Natural killer cell (primary cell): ENCODE measurements at regions of chr6 and their contacts with region 1.

Region 1: DNA sequence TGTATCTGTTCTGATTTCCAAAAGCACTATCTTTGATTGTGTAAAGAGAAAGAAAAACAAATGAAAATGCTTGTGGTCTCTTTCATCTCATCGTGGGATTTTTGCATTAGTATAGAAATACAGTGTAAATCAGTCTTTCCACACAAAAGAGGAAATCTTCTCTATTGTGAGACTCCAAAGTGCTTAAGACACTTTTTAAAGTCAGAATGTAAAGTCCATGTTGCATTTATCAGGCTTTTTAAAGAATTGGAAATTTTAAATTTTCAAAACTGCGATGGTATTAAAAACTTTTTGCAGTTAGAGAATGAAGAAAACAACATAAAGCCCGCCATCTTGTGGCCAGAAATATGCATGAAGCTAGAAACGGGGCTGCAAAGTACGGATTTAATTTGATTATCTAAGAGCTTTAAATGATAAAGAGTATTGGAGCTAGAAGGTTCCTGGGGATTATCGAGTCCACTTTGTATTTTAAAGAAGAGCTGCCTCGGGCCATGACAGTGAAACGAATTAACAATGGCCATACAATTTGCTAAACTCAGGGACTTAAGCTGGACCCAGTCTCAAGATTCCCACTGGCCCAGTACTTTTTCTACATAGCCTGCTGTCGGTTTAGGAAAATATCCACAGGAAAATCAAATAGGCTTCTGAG is 339.6 kb downstream of the ARHGAP18 start:
- DNase-seq: peak in 1 of 2 donors; percentile 68
- ATAC-seq: peak in 1 of 3 donors; percentile 57
- H3K4me3 ChIP-seq: no peak overlapping the region
- H3K4me3 Mint-ChIP-seq: peak overlapping the region; percentile 69
- H3K27ac ChIP-seq: no peak overlapping the region
- H3K27ac Mint-ChIP-seq: no peak overlapping the region
- H3K4me1 ChIP-seq: peaks cover 12% of the 10 kb centered on the region
- H3K4me1 Mint-ChIP-seq: peaks cover 32 to 36% of the 10 kb centered on the region in 2 donors
- H3K27me3 ChIP-seq: no peaks in the 10 kb centered on the region
- H3K27me3 Mint-ChIP-seq: no peaks in the 10 kb centered on the region
- CTCF ChIP-seq: peak; percentile 83

Region 2: GRCh38 chr6:127737009-127737486 is 1633.3 kb before region 1 on chr6:
- intact Hi-C with region 1: loop called (anchors 2 kb)
- DNase-seq: peak in 1 of 2 donors; percentile 85
- ATAC-seq: peak; percentile 69 to 79 (median 77)
- H3K4me3 ChIP-seq: no peak overlapping the region
- H3K4me3 Mint-ChIP-seq: no peak overlapping the region
- H3K27ac ChIP-seq: no peak overlapping the region
- H3K27ac Mint-ChIP-seq: no peak overlapping the region
- H3K4me1 ChIP-seq: no peaks in the 10 kb centered on the region
- H3K4me1 Mint-ChIP-seq: no peaks in the 10 kb centered on the region
- H3K27me3 ChIP-seq: no peaks in the 10 kb centered on the region
- H3K27me3 Mint-ChIP-seq: peaks cover 0 to 7% of the 10 kb centered on the region in 2 donors
- CTCF ChIP-seq: peak; percentile 57

Region 3: GRCh38 chr6:127855542-127856159 is 1514.7 kb before region 1 on chr6:
- intact Hi-C with region 1: loop called (anchors 5 kb)
- DNase-seq: peak in 1 of 2 donors; percentile 78
- ATAC-seq: no peak
- H3K4me3 ChIP-seq: no peak overlapping the region
- H3K4me3 Mint-ChIP-seq: no peak overlapping the region
- H3K27ac ChIP-seq: no peak overlapping the region
- H3K27ac Mint-ChIP-seq: no peak overlapping the region
- H3K4me1 ChIP-seq: no peaks in the 10 kb centered on the region
- H3K4me1 Mint-ChIP-seq: peaks cover 4 to 6% of the 10 kb centered on the region in 2 donors
- H3K27me3 ChIP-seq: no peaks in the 10 kb centered on the region
- H3K27me3 Mint-ChIP-seq: peaks cover 0 to 3% of the 10 kb centered on the region in 2 donors
- CTCF ChIP-seq: peak; percentile 65

Region 4: GRCh38 chr6:128725271-128726233 is 644.8 kb before region 1 on chr6:
- intact Hi-C with region 1: loop called (anchors 5 kb)
- DNase-seq: peak in 1 of 2 donors; percentile 45
- ATAC-seq: no peak
- H3K4me3 ChIP-seq: no peak overlapping the region
- H3K4me3 Mint-ChIP-seq: no peak overlapping the region
- H3K27ac ChIP-seq: no peak overlapping the region
- H3K27ac Mint-ChIP-seq: no peak overlapping the region
- H3K4me1 ChIP-seq: no peaks in the 10 kb centered on the region
- H3K4me1 Mint-ChIP-seq: no peaks in the 10 kb centered on the region
- H3K27me3 ChIP-seq: no peaks in the 10 kb centered on the region
- H3K27me3 Mint-ChIP-seq: peaks cover 4 to 33% of the 10 kb centered on the region in 2 donors
- CTCF ChIP-seq: peak; percentile 73

Region 5: DNA sequence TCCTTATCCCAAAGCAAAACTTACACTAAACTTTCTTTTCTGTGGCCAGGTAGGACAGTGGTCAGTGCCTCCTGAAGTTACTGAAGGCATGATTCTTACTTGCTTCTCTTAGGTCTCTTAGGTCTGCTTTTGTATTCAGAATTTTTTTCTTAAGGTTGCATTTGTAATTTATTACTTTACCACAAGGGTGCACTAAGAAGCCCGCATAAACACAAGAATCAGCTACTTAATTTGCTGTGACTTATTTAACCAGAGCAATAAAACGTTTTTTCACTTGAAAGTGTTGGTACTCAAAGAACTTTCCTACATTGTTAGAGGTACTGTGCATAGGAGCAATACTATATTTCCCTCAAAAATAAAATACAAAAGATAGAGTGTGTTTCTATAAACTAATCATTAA is 562.8 kb before region 1 on chr6:
- intact Hi-C with region 1: loop called (anchors 5 kb)
- DNase-seq: peak in 1 of 2 donors; percentile 6
- ATAC-seq: no peak
- H3K4me3 ChIP-seq: no peak overlapping the region
- H3K4me3 Mint-ChIP-seq: no peak overlapping the region
- H3K27ac ChIP-seq: no peak overlapping the region
- H3K27ac Mint-ChIP-seq: no peak overlapping the region
- H3K4me1 ChIP-seq: no peaks in the 10 kb centered on the region
- H3K4me1 Mint-ChIP-seq: no peaks in the 10 kb centered on the region
- H3K27me3 ChIP-seq: no peaks in the 10 kb centered on the region
- H3K27me3 Mint-ChIP-seq: no peaks in the 10 kb centered on the region
- CTCF ChIP-seq: no peak

Region 6: DNA sequence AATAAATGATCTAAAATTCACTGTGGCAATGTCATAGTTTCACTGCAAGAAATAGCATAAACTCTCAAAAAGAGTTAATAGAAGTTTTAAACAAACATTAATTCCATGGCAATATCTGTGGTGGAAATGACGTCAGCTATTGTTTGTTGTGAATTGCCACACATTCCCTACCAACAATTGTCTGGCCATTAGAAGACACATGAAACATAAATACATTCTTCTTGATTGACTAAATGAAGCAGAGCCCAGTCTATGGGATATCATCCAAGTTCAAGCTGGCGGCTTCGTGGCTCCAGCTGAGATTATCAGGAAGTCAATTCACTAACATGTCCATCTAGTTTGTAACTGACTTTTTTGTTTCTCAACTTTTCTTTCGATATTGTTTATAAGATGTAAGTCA is 29.4 kb before region 1 on chr6:
- intact Hi-C with region 1: no loop called
- DNase-seq: no peak
- ATAC-seq: no peak
- H3K4me3 ChIP-seq: no peak overlapping the region
- H3K4me3 Mint-ChIP-seq: no peak overlapping the region
- H3K27ac ChIP-seq: no peak overlapping the region
- H3K27ac Mint-ChIP-seq: no peak overlapping the region
- H3K4me1 ChIP-seq: no peaks in the 10 kb centered on the region
- H3K4me1 Mint-ChIP-seq: no peaks in the 10 kb centered on the region
- H3K27me3 ChIP-seq: peaks cover 2% of the 10 kb centered on the region
- H3K27me3 Mint-ChIP-seq: peaks cover 15 to 31% of the 10 kb centered on the region in 2 donors
- CTCF ChIP-seq: no peak

Region 7: DNA sequence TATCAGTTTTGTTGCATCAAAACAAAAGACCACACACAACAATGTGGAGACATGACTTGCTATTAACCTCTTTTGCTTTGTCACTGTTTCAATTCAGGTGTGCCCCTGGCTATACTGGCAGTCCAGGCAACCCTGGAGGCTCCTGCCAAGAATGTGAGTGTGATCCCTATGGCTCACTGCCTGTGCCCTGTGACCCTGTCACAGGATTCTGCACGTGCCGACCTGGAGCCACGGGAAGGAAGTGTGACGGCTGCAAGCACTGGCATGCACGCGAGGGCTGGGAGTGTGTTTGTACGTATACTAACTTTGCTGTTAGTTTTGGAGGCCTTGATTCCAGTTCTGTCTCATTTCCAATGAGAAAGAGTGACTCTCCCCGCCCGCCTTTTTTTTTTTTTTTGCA is 17.3 kb before region 1 on chr6:
- intact Hi-C with region 1: no loop called
- DNase-seq: no peak
- ATAC-seq: no peak
- H3K4me3 ChIP-seq: no peak overlapping the region
- H3K4me3 Mint-ChIP-seq: no peak overlapping the region
- H3K27ac ChIP-seq: no peak overlapping the region
- H3K27ac Mint-ChIP-seq: no peak overlapping the region
- H3K4me1 ChIP-seq: no peaks in the 10 kb centered on the region
- H3K4me1 Mint-ChIP-seq: peaks cover 0 to 8% of the 10 kb centered on the region in 2 donors
- H3K27me3 ChIP-seq: no peaks in the 10 kb centered on the region
- H3K27me3 Mint-ChIP-seq: no peaks in the 10 kb centered on the region
- CTCF ChIP-seq: no peak